ENCODE measurements at regions of chr3 and their contacts with region 1.

Region 1: GRCh38 chr3:112531358-112531781 is 30.4 kb downstream of the ATG3 start:
- DNase-seq: peak in 2 of 3 donors; percentile 14 to 32
- H3K4me3 ChIP-seq: no peak overlapping the region
- H3K4me3 Mint-ChIP-seq: no peak overlapping the region
- H3K27ac ChIP-seq: no peak overlapping the region
- H3K27ac Mint-ChIP-seq: no peak overlapping the region
- H3K4me1 ChIP-seq: no peaks in the 10 kb centered on the region
- H3K4me1 Mint-ChIP-seq: no peaks in the 10 kb centered on the region
- H3K27me3 ChIP-seq: no peaks in the 10 kb centered on the region
- H3K27me3 Mint-ChIP-seq: no peaks in the 10 kb centered on the region
- CTCF ChIP-seq: peak; percentile 74

Region 2: DNA sequence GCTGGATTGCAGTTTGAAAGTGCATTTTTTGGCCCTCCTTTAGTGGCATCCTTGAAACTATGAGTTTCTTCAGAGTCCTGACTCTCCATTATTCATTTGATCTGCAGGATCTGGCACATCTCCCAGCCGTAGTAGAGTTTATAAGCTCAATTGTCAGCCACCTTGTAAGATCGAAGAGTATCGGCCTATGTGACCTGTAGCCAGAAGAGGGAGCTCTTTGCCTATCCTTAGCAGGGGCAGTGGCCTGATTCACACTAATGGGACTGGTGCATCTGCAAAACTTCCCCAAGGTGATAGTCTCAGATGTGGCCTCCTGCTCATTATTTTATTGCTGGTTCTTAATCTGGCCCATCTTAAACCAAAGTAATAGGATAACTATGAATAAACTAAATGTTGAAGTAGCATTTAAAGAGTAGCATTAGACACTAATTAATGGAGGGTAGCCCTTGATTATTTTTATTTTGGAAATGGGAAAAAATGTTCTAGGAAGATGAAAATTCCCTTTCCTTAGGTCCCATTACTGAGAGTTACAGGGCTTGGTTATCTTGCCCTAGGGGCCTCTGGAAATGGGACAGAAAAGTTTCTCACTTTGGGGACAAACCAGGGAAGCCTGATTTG is 419.5 kb before region 1 on chr3:
- intact Hi-C with region 1: loop called (anchors 5 kb)
- DNase-seq: peak; percentile 51 to 68 (median 60)
- H3K4me3 ChIP-seq: no peak overlapping the region
- H3K4me3 Mint-ChIP-seq: no peak overlapping the region
- H3K27ac ChIP-seq: no peak overlapping the region
- H3K27ac Mint-ChIP-seq: no peak overlapping the region
- H3K4me1 ChIP-seq: peaks cover 0 to 1% of the 10 kb centered on the region in 2 donors
- H3K4me1 Mint-ChIP-seq: peaks cover 6% of the 10 kb centered on the region
- H3K27me3 ChIP-seq: peaks cover 2 to 9% of the 10 kb centered on the region in 2 donors
- H3K27me3 Mint-ChIP-seq: peaks cover 9 to 24% (median 12%) of the 10 kb centered on the region in 3 donors
- CTCF ChIP-seq: peak; percentile 92

Region 3: GRCh38 chr3:112561731-112562688 is 30.6 kb after region 1 on chr3 and contains the starts of genes ATG3 and SLC35A5:
- intact Hi-C with region 1: no loop called
- DNase-seq: peak; percentile 98 to 99 (median 99)
- H3K4me3 ChIP-seq: peak within 1 kb of the TSS; percentile 58 to 99 (median 94)
- H3K4me3 Mint-ChIP-seq: peak within 1 kb of the TSS; percentile 95 to 97
- H3K27ac ChIP-seq: peak within 1 kb of the TSS; percentile 98 to 99
- H3K27ac Mint-ChIP-seq: peak within 1 kb of the TSS; percentile 98 to 100 (median 99)
- H3K4me1 ChIP-seq: peaks cover 38 to 43% of the 10 kb centered on the region in 2 donors
- H3K4me1 Mint-ChIP-seq: peaks cover 44% of the 10 kb centered on the region
- H3K27me3 ChIP-seq: no peaks in the 10 kb centered on the region
- H3K27me3 Mint-ChIP-seq: no peaks in the 10 kb centered on the region
- CTCF ChIP-seq: peak; percentile 6
- polyA plus RNA-seq, gene ATG3: 99.8 to 288 (median 226) TPM
- polyA plus RNA-seq, gene SLC35A5: 16.8 to 74.1 (median 61.3) TPM